PC-9 (cell line): ENCODE measurements at regions of chr16 and their contacts with region 1.

Region 1: GRCh38 chr16:22151246-22151998 is 10.9 kb upstream of the SDR42E2 start:
- DNase-seq: no peak
- H3K4me3 ChIP-seq: no peak overlapping the region
- H3K27ac ChIP-seq: no peak overlapping the region
- H3K4me1 ChIP-seq: peaks cover 9% of the 10 kb centered on the region; the same call in 1 of the 2 replicates
- H3K27me3 ChIP-seq: no peaks in the 10 kb centered on the region; the same call in 1 of the 2 replicates
- CTCF ChIP-seq: no peak

Region 2: GRCh38 chr16:22164482-22164881 is 13.1 kb after region 1 on chr16:
- CTCF ChIA-PET with region 1: interaction called, 11 read pairs
- POLR2A ChIA-PET with region 1: no interaction called
- intact Hi-C with region 1: no loop called
- DNase-seq: no peak
- H3K4me3 ChIP-seq: no peak overlapping the region
- H3K27ac ChIP-seq: no peak overlapping the region
- H3K4me1 ChIP-seq: no peaks in the 10 kb centered on the region
- H3K27me3 ChIP-seq: peaks cover 11% of the 10 kb centered on the region; the same call in 1 of the 2 replicates
- CTCF ChIP-seq: no peak

Region 3: DNA sequence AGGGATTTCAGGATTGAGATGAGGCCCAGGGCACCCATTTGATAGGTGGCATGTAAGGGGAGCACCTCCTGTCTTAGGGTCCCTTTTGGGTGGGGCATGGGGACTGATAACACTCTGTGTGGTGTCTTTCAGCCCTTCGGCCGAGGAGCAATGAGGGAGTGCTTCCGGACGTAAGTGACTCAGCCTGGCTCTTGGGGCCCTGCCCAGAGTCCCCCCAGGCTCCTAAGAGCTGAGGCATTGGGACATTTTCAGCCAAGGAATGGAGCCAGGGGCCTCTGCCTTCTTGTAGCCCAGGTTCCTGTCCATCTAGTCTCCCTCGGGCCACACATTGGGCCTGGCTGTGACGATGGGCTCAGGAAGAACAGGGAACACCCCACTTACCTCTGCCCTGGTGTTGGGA is 99.1 kb after region 1 on chr16:
- CTCF ChIA-PET with region 1: no interaction called
- POLR2A ChIA-PET with region 1: no interaction called
- intact Hi-C with region 1: no loop called
- DNase-seq: no peak
- H3K4me3 ChIP-seq: no peak overlapping the region
- H3K27ac ChIP-seq: no peak overlapping the region
- H3K4me1 ChIP-seq: no peaks in the 10 kb centered on the region
- H3K27me3 ChIP-seq: no peaks in the 10 kb centered on the region
- CTCF ChIP-seq: no peak